Sigmoid colon (tissue), 7 donors: ENCODE measurements at regions of chr22 and their contacts with region 1.

Region 1: DNA sequence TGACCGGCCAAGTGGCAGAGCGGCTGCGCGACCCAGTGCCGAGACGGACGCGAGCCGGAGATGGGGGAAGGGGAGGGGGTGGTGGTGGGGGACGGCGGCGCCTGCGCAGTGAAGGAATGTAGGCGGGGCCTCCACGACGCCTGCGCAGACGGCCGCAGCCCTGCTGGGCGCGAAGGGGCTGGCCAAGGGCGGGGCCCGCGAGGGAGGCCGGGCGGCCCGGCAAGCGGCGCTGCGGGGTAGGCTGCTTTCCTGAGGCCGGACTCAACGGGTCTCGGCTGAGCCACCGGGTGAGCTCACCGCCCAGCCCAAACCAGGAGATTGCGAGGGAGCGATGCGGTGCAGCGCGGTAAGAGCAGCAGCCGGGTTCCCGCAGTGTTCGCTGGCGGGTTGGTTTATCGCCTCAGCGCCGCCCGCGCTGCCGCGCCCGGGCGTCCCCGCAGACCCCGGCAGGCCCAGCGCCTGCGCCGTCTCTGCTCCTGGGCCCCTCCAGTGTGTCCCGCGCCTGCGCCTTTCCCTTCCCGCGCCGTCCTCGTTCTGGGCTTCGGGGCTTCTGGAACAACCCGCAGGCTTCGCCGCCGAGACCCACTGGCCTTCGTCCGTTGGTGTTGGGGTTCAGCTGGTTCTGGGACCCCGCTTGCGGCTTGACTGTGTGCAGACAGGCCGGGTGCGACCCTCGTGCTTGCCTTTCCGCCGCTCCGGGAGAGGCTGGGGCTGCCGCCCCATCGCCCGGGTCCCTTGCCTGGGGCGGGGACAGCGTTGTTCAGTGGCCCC is at the start of gene SPECC1L:
- DNase-seq: peak; percentile 98
- H3K4me3 ChIP-seq: peak within 1 kb of the TSS; percentile 72 to 94 (median 88)
- H3K27ac ChIP-seq: peak within 1 kb of the TSS; percentile 87 to 96 (median 94)
- H3K4me1 ChIP-seq: peaks cover 0 to 40% (median 33%) of the 10 kb centered on the region in 4 donors
- H3K27me3 ChIP-seq: no peaks in the 10 kb centered on the region
- CTCF ChIP-seq: no peak
- EP300 ChIP-seq: no peak
- POLR2A ChIP-seq: peak; percentile 82
- total RNA-seq, gene SPECC1L: 28.8 to 52.6 (median 38.9) TPM

Region 2: DNA sequence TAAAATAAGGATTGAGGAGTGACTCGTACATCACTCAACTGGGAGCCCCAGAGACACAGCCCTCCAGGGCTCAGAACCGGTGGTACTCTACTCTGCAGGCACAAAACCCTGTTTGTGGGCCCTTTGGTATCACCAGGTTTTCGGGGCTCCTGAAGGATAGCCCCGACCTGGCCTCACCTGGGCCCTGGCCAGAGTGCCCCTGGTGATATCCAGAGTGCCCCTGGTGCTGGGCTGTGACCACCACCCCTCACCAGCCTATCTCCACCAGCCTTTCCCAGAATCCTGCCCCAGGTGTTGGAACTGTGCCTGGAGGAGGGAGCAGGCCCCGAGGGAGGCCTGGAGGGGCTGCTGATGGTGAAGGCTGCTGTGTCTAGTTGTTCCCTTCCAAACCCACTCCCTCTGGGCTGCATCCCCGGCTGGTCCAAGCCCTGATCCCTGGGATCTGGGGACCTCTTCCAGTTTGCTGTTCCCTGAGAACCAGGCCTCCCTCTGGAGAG is 23.8 kb before region 1 on chr22:
- intact Hi-C with region 1: no loop called
- DNase-seq: no peak
- H3K4me3 ChIP-seq: no peak overlapping the region
- H3K27ac ChIP-seq: peak overlapping the region; percentile 78 to 82 (median 78)
- H3K4me1 ChIP-seq: peaks cover 0 to 34% (median 31%) of the 10 kb centered on the region in 4 donors
- H3K27me3 ChIP-seq: no peaks in the 10 kb centered on the region
- CTCF ChIP-seq: no peak
- EP300 ChIP-seq: no peak
- POLR2A ChIP-seq: no peak

Region 3: DNA sequence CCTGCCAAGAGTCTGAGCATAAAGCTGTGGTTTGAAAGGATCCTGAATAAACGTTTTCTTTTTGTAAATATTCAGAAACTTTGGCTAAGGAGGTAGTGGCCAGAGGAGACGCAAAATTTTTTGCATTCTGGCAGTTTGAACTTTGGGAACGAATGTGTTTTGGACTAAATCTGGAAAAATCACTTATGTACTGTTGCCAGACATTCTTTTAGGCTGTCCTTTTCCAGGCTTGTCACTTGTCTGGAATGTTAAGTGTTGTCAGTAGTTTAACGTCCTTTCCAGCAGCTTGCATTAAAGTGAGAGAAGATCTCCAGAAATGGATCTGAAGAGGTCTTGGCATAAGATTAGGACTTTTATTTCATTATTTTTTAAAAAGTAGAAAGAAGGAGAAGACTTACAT is 18.3 kb after region 1 on chr22:
- intact Hi-C with region 1: loop called (anchors 2 kb)
- DNase-seq: no peak
- H3K4me3 ChIP-seq: peak overlapping the region in 1 of 4 donors; percentile 0
- H3K27ac ChIP-seq: peak overlapping the region; percentile 65 to 86 (median 78)
- H3K4me1 ChIP-seq: peaks cover 0 to 82% (median 68%) of the 10 kb centered on the region in 4 donors
- H3K27me3 ChIP-seq: no peaks in the 10 kb centered on the region
- CTCF ChIP-seq: no peak
- EP300 ChIP-seq: no peak
- POLR2A ChIP-seq: no peak

Region 4: DNA sequence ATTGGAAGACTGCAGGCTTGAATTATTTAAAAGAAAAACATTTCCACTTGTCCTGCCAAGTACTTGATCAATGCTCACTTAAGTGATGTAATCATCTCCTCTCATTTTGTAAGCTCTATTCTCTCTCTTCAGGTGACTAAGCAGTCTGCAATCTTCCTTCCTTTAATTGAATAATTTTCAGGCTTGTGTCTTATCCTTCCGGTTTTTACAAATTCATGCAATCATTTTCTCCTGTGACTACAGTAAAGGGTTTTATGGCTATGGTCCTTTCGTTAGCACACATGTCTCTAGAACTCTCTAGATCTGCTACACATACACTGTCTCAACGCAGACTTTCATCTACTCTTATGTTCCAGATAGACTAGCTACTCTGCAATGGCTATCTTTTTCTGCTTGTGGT is 211.8 kb after region 1 on chr22:
- intact Hi-C with region 1: no loop called
- DNase-seq: no peak
- H3K4me3 ChIP-seq: no peak overlapping the region
- H3K27ac ChIP-seq: peak overlapping the region in 2 of 4 donors; percentile 3 to 27
- H3K4me1 ChIP-seq: peaks cover 0 to 14% (median 7%) of the 10 kb centered on the region in 4 donors
- H3K27me3 ChIP-seq: no peaks in the 10 kb centered on the region
- CTCF ChIP-seq: no peak
- EP300 ChIP-seq: no peak
- POLR2A ChIP-seq: no peak